Activated CD8-positive, alpha-beta memory T cell treated with anti-CD3 and anti-CD28 coated beads, Interleukin-2, amount 10 ng/mL, durations not matched to agents 7 days and 5 days (primary cell): ENCODE measurements at regions of chr16 and their contacts with region 1.

Region 1: DNA sequence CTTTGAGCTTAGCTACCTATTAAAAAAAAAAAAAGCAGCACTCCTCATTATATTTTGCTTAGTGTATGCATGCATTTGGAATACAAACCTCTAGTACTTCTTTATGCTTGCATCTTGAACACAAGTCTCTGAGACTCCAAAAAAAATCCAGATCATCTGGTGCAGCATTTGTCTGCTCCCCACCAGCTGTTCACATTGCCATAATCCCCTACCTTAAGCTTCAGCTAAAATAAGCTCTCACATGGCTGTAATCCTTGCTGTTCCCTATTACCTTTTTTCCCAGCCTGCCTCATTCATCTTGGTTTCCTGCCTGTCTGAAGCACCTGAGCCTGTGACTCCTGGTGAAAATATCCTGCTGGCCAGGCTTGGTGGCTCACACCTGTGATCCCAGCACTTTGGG is 7.5 kb upstream of the NFATC2IP start:
- DNase-seq: no peak
- ATAC-seq: no peak
- H3K4me3 Mint-ChIP-seq: no peak overlapping the region
- H3K27ac Mint-ChIP-seq: no peak overlapping the region
- H3K4me1 Mint-ChIP-seq: peaks cover 19% of the 10 kb centered on the region
- H3K27me3 Mint-ChIP-seq: no peaks in the 10 kb centered on the region

Region 2: GRCh38 chr16:28823872-28824716 is 119.2 kb before region 1 on chr16:
- CTCF ChIA-PET with region 1: interaction called, 22 read pairs
- DNase-seq: peak; percentile 99
- ATAC-seq: peak; percentile 79
- H3K4me3 Mint-ChIP-seq: peak overlapping the region; percentile 100
- H3K27ac Mint-ChIP-seq: peak overlapping the region; percentile 96
- H3K4me1 Mint-ChIP-seq: peaks cover 52% of the 10 kb centered on the region
- H3K27me3 Mint-ChIP-seq: no peaks in the 10 kb centered on the region

Region 3: DNA sequence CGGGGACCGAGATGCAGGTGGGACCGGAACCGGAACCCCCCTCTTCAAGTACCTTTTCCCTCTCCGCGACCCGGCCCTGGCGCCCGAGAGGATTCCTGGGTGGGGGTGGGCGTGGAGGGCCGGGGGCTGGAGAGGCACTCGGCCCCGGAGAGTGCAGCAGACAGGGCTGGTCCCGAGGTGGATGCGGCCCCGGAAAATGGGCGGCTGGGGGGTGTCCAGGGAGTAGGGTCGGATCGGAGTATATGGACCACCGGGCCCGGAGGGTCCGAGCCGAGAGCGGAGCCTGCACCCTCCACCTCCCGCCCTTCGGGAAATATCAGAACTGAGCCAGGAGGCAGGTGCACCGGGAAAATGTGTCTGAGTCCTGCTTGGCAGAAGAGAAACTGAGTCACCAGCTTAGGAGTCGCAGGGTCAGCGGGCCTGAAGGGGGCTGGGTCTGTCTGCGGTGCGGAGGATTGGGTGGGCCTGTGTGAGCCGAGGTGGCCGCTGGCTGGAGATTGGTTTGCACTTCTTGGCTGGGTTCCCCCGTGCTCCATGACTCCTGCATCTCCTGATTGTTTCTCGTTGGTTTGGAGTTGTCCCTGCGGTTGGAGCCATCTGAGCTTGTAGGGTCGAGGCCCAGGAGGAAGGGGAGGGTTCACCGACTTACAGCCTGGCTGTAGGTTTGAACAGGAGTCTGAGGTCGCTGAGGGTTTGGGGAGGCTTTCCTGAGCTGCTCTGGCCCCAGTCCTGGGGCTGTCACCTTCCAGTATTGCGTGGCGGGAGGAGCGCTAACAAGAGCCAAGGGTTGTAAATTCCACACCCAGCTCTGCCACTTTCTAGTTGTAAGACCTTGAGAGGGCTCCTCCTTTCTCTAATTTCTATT is 79.1 kb before region 1 on chr16:
- CTCF ChIA-PET with region 1: interaction called, 18 read pairs
- DNase-seq: no peak
- ATAC-seq: no peak
- H3K4me3 Mint-ChIP-seq: peak overlapping the region; percentile 89
- H3K27ac Mint-ChIP-seq: peak overlapping the region; percentile 96
- H3K4me1 Mint-ChIP-seq: peaks cover 23% of the 10 kb centered on the region
- H3K27me3 Mint-ChIP-seq: no peaks in the 10 kb centered on the region

Region 4: GRCh38 chr16:28879841-28880588 is 63.3 kb before region 1 on chr16:
- CTCF ChIA-PET with region 1: interaction called, 43 read pairs
- DNase-seq: peak; percentile 96
- ATAC-seq: peak; percentile 98
- H3K4me3 Mint-ChIP-seq: peak overlapping the region; percentile 88
- H3K27ac Mint-ChIP-seq: peak overlapping the region; percentile 76
- H3K4me1 Mint-ChIP-seq: peaks cover 40% of the 10 kb centered on the region
- H3K27me3 Mint-ChIP-seq: peaks cover 3% of the 10 kb centered on the region

Region 5: DNA sequence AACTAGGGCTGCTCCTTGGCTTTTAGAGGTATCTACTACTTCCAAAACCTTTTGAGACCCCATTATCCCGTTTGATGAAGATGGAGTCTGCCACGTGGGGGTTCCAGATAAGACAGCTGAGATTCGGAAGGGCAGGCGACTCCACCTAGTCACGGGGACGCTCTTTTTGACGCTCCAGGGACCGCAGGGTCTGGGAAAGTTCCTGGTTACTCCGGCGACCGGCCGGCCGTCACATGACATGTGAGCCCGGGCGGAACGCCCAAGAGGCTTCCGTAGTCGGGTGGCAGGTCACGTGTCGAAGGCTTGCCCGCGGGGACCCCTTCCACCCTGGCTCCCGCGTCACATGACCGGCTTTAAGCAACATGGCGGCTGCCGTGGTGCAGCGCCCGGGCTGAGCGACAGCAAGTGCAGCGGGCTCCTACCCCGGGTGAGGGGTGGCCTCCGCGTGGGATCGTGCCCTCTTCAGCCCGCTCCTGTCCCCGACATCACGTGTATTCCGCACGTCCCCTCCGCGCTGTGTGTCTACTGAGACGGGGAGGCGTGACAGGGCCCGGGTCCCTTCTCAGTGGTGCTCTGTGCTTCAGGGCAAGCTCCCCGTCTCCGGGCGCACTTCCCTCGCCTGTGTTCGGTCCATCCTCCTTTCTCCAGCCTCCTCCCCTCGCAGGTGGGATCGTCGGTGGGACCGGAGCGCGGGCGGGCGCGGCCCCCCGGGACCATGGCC is 31.3 kb after region 1 on chr16 and contains the start of gene SPNS1:
- CTCF ChIA-PET with region 1: interaction called, 11 read pairs
- DNase-seq: peak; percentile 98
- ATAC-seq: peak; percentile 97
- H3K4me3 Mint-ChIP-seq: peak within 1 kb of the TSS; percentile 95
- H3K27ac Mint-ChIP-seq: peak within 1 kb of the TSS; percentile 91
- H3K4me1 Mint-ChIP-seq: peaks cover 28% of the 10 kb centered on the region
- H3K27me3 Mint-ChIP-seq: no peaks in the 10 kb centered on the region
- total RNA-seq, gene SPNS1: 22.1 to 27.6 TPM

Region 6: GRCh38 chr16:28990375-28991040 is 47.2 kb after region 1 on chr16:
- CTCF ChIA-PET with region 1: no interaction called
- DNase-seq: peak; percentile 80
- ATAC-seq: peak; percentile 72
- H3K4me3 Mint-ChIP-seq: peak overlapping the region; percentile 61
- H3K27ac Mint-ChIP-seq: peak overlapping the region; percentile 92
- H3K4me1 Mint-ChIP-seq: peaks cover 49% of the 10 kb centered on the region
- H3K27me3 Mint-ChIP-seq: no peaks in the 10 kb centered on the region